RWPE1 (cell line): ENCODE measurements at regions of chr1 and their contacts with region 1.

Region 1: GRCh38 chr1:38962113-38962512 is 20.5 kb upstream of the RHBDL2 start:
- DNase-seq: no peak
- H3K27ac ChIP-seq: no peak overlapping the region
- CTCF ChIP-seq: no peak

Region 2: DNA sequence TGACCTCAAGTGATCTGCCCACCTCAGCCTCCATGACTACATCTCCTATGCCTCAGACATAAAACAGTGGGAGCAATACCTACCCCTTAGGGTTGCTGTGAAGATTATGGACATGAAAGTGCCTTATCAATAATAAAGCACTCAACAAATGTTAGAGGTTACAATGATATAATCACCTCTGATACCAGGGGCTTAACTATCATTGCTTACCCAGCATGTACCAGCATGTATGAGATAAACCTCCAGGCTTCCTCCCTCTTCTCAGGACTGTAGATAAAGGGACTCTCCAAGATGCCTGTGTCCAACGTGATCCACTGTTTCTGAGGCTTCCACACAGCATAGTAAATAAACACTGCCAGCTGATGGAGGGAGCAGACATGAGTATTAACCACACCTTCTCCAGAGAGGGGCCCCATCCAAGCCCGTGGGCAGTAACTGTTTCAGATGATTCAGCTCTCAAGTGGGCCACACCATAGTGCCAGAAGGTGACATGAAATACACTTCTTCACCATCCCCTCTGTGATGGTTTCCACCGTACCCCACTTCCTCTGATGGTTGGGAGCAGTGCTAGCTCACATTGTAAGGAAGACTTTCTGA is 46.7 kb before region 1 on chr1:
- CTCF ChIA-PET with region 1: no interaction called
- POLR2A ChIA-PET with region 1: no interaction called
- DNase-seq: no peak
- H3K27ac ChIP-seq: no peak overlapping the region
- CTCF ChIP-seq: no peak

Region 3: GRCh38 chr1:38973659-38974424 is 11.7 kb after region 1 on chr1:
- CTCF ChIA-PET with region 1: interaction called, 12 read pairs
- POLR2A ChIA-PET with region 1: no interaction called
- DNase-seq: no peak
- H3K27ac ChIP-seq: no peak overlapping the region
- CTCF ChIP-seq: no peak

Region 4: DNA sequence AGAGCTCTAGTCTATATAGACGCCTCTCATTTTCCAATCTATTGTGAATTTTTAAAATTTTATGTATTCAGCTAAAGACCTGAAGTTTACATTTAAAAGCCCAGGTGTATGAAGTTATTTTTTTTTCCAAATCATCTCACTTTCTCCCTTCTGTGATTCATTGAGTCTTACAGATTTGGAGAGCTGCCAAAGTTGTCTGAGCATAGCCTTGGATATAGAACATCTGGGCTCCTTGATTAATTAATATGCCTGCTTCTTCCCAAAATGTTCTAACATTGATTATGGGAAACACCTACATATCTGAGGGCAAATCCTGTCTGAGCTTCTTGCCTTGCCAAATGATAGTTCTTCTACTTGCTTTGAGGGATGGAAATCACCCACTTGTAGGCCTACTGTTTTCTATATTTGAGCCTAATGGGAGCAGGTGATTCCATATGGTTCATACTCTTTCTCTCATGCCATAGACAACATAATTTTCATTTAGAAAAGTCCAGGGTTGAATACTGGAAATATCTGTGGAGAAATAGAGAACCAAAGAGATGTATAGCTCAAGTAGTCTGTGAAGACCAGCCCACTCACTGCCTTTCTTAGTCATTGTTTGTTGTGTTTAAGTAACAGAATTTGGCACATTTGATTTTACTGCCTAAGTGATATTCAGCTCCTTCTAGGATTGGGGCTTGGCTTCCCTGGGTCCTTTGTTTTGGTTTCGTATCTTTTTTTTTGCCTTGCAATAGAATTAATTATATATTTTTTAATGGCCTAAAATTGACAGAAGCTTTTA is 288.5 kb after region 1 on chr1:
- CTCF ChIA-PET with region 1: no interaction called
- POLR2A ChIA-PET with region 1: no interaction called
- DNase-seq: no peak
- H3K27ac ChIP-seq: no peak overlapping the region
- CTCF ChIP-seq: no peak